ENCODE measurements at regions of chr17 and their contacts with region 1.

Region 1: GRCh38 chr17:47895856-47896671 is at the start of gene SP2:
- DNase-seq: peak; percentile 97
- ATAC-seq: peak; percentile 88
- H3K4me3 Mint-ChIP-seq: peak within 1 kb of the TSS; percentile 98
- H3K27ac Mint-ChIP-seq: peak within 1 kb of the TSS; percentile 99
- H3K4me1 Mint-ChIP-seq: peaks cover 44% of the 10 kb centered on the region
- H3K27me3 Mint-ChIP-seq: no peaks in the 10 kb centered on the region
- CTCF ChIP-seq: no peak
- total RNA-seq, gene SP2: 26.5 and 28.5 TPM in 2 replicates

Region 2: GRCh38 chr17:47604598-47604927 is 291.5 kb before region 1 on chr17:
- CTCF ChIA-PET with region 1: no interaction called
- POLR2A ChIA-PET with region 1: no interaction called
- intact Hi-C with region 1: no loop called
- DNase-seq: no peak
- ATAC-seq: no peak
- H3K4me3 Mint-ChIP-seq: no peak overlapping the region
- H3K27ac Mint-ChIP-seq: no peak overlapping the region
- H3K4me1 Mint-ChIP-seq: no peaks in the 10 kb centered on the region
- H3K27me3 Mint-ChIP-seq: no peaks in the 10 kb centered on the region
- CTCF ChIP-seq: no peak

Region 3: GRCh38 chr17:47649153-47649971 is 246.7 kb before region 1 on chr17 and contains the start of gene KPNB1:
- CTCF ChIA-PET with region 1: no interaction called
- POLR2A ChIA-PET with region 1: interaction called, 34 read pairs
- intact Hi-C with region 1: no loop called
- DNase-seq: peak; percentile 92
- ATAC-seq: peak; percentile 80
- H3K4me3 Mint-ChIP-seq: peak within 1 kb of the TSS; percentile 99
- H3K27ac Mint-ChIP-seq: peak within 1 kb of the TSS; percentile 99
- H3K4me1 Mint-ChIP-seq: peaks cover 53% of the 10 kb centered on the region
- H3K27me3 Mint-ChIP-seq: no peaks in the 10 kb centered on the region
- CTCF ChIP-seq: no peak
- total RNA-seq, gene KPNB1: 361 and 365 TPM in 2 replicates

Region 4: GRCh38 chr17:47733047-47733673 is 162.9 kb before region 1 on chr17 and contains the start of gene TBX21:
- CTCF ChIA-PET with region 1: no interaction called
- POLR2A ChIA-PET with region 1: interaction called, 7 read pairs
- intact Hi-C with region 1: loop called (anchors 2 kb)
- DNase-seq: peak; percentile 79
- ATAC-seq: peak; percentile 91
- H3K4me3 Mint-ChIP-seq: peak within 1 kb of the TSS; percentile 94
- H3K27ac Mint-ChIP-seq: peak within 1 kb of the TSS; percentile 87
- H3K4me1 Mint-ChIP-seq: peaks cover 52% of the 10 kb centered on the region
- H3K27me3 Mint-ChIP-seq: peaks cover 2% of the 10 kb centered on the region
- CTCF ChIP-seq: peak; percentile 43
- total RNA-seq, gene TBX21: 3.6 and 3.8 TPM in 2 replicates

Region 5: GRCh38 chr17:47831003-47831933 is 64.8 kb before region 1 on chr17 and contains the starts of genes LRRC46 and MRPL10:
- CTCF ChIA-PET with region 1: no interaction called
- POLR2A ChIA-PET with region 1: interaction called, 39 read pairs
- intact Hi-C with region 1: loop called (anchors 1 kb)
- DNase-seq: peak; percentile 87
- ATAC-seq: peak; percentile 96
- H3K4me3 Mint-ChIP-seq: peak within 1 kb of the TSS; percentile 96
- H3K27ac Mint-ChIP-seq: peak within 1 kb of the TSS; percentile 92
- H3K4me1 Mint-ChIP-seq: peaks cover 29% of the 10 kb centered on the region
- H3K27me3 Mint-ChIP-seq: no peaks in the 10 kb centered on the region
- CTCF ChIP-seq: no peak
- total RNA-seq, gene LRRC46: 1.5 and 1.9 TPM in 2 replicates
- total RNA-seq, gene MRPL10: 36.4 and 37.4 TPM in 2 replicates

Region 6: GRCh38 chr17:47850692-47851573 is 45.1 kb before region 1 on chr17 and contains the start of gene SP6:
- CTCF ChIA-PET with region 1: interaction called, 207 read pairs
- POLR2A ChIA-PET with region 1: interaction called, 16 read pairs
- intact Hi-C with region 1: no loop called
- DNase-seq: peak; percentile 51
- ATAC-seq: peak; percentile 89
- H3K4me3 Mint-ChIP-seq: peak within 1 kb of the TSS; percentile 61
- H3K27ac Mint-ChIP-seq: no peak within 1 kb of the TSS
- H3K4me1 Mint-ChIP-seq: peaks cover 25% of the 10 kb centered on the region
- H3K27me3 Mint-ChIP-seq: peaks cover 73% of the 10 kb centered on the region
- CTCF ChIP-seq: no peak
- total RNA-seq, gene SP6: 0.09 TPM in 1 of 2 replicates, not detected in the other

Region 7: GRCh38 chr17:47949136-47949759 is 53.2 kb after region 1 on chr17:
- CTCF ChIA-PET with region 1: no interaction called
- POLR2A ChIA-PET with region 1: interaction called, 14 read pairs
- intact Hi-C with region 1: no loop called
- DNase-seq: peak; percentile 76
- ATAC-seq: peak; percentile 80
- H3K4me3 Mint-ChIP-seq: peak overlapping the region; percentile 72
- H3K27ac Mint-ChIP-seq: peak overlapping the region; percentile 62
- H3K4me1 Mint-ChIP-seq: peaks cover 33% of the 10 kb centered on the region
- H3K27me3 Mint-ChIP-seq: no peaks in the 10 kb centered on the region
- CTCF ChIP-seq: peak; percentile 78

Region 8: DNA sequence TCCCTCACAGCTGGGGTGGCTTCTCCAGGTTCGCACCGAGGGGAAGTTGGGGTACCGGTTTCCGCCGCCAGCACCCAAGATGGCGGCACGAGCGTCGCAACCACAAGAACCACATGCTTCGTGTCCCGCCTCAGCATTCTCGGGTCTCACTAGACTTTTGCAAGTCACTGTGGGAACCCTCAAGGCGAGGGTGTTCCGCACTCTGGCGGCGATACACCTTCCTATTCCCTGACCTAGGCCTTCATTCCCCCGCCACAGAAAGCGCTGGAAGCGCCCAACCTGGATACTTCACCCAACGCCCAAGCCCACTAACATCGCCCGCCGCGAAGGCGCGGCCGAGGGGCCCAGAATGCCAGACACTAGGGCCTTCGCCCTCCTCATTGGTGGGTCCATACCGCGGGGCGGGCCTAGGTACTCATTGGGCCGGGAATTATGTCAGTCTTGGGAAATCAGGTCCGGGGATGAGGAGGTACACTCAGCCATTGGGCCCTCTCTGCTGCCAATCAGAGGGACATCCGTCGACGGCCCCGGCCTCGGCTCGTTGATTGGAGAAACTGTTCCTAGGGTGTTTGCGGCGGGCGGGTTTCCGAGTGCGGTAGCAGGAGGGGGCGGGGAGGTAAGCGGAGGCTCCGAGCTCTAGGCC is 151.8 kb after region 1 on chr17 and contains the start of gene NFE2L1:
- CTCF ChIA-PET with region 1: no interaction called
- POLR2A ChIA-PET with region 1: interaction called, 13 read pairs
- intact Hi-C with region 1: loop called (anchors 1 kb)
- DNase-seq: peak; percentile 89
- ATAC-seq: peak; percentile 94
- H3K4me3 Mint-ChIP-seq: peak within 1 kb of the TSS; percentile 97
- H3K27ac Mint-ChIP-seq: peak within 1 kb of the TSS; percentile 100
- H3K4me1 Mint-ChIP-seq: peaks cover 62% of the 10 kb centered on the region
- H3K27me3 Mint-ChIP-seq: no peaks in the 10 kb centered on the region
- CTCF ChIP-seq: no peak
- total RNA-seq, gene NFE2L1: 127 and 141 TPM in 2 replicates

Region 9: DNA sequence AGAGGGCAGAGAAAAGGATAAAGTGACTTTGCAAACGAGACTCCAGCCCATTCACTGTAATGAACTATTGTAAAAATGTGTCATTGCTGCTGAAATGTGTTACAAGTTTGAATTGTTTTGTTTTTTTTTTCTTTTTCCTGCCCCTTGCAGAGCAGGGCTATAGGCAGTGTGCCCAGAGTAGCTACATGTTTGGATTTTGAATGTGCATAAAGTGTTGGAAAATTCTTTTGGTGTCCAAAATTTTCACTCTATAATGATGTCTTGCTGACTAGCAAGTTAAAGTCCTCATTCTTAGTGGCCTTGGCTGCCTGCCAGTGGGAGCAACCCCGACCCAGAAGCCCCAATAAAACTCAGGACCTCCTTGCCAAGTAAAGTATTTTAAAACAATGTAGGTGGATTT is 1167.6 kb after region 1 on chr17:
- CTCF ChIA-PET with region 1: no interaction called
- POLR2A ChIA-PET with region 1: no interaction called
- intact Hi-C with region 1: no loop called
- DNase-seq: no peak
- ATAC-seq: no peak
- H3K4me3 Mint-ChIP-seq: no peak overlapping the region
- H3K27ac Mint-ChIP-seq: no peak overlapping the region
- H3K4me1 Mint-ChIP-seq: no peaks in the 10 kb centered on the region
- H3K27me3 Mint-ChIP-seq: peaks cover 2% of the 10 kb centered on the region
- CTCF ChIP-seq: no peak